GM12878 (cell line): ENCODE measurements at regions of chr4 and their contacts with region 1.

Region 1: DNA sequence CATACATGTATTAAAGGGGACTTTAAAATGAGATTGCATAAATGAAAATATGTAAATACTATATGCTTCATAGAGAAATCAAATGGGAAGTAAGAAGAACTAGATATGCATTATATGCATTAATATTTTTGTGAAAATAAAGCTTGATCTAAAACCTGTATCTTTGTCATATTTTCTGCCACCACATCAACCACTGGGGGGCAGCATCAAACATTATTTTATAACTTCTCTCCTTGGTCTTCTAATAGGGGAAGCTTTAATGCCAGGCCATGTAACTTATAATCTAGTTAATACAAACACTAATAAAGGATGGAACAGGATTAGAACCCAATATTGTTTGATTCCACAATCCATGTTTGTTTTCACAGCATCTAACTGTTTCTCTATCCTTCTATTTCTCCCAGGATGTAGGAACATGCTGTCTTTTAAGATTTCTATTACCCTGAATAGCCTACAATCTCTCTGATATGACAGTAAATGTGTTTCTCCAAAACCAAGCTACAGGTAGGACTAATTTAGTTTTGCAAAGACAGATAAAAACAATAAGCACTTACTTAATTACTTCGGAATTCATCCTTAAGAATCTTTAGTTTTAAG is 10.0 kb downstream of the QRFPR start:
- DNase-seq: no peak
- ATAC-seq: peak; percentile 81
- H3K4me3 ChIP-seq: no peak overlapping the region
- H3K27ac ChIP-seq: no peak overlapping the region
- H3K4me1 ChIP-seq: no peaks in the 10 kb centered on the region
- H3K27me3 ChIP-seq: no peaks in the 10 kb centered on the region; a peak in 1 of 4 replicates
- CTCF ChIP-seq: peak; percentile 34 to 64 (median 52); a peak in 5 of 6 replicates
- EP300 ChIP-seq: no peak
- POLR2A ChIP-seq: no peak
- RAD21 ChIP-seq: peak; percentile 47

Region 2: DNA sequence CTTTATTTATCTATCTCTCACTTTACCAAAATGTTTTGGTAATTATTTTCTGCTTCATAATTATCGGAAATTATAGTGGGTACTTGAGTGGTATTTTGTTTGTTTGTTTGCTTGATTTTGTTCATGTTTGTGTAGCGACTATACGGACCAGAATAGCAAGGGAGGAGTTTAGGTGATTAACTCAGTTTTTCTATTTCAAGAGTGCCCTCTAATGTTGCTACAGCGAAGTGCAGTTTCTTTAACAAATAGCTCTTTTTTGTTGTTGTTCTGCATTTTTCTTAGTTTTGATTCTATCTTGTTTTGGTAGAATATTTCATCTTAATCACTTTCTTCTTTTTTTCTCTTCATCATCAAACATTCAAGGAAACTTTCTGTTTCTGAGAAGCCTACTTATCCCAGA is 50.8 kb after region 1 on chr4:
- CTCF ChIA-PET with region 1: interaction called, 23 read pairs
- POLR2A ChIA-PET with region 1: no interaction called
- RAD21 ChIA-PET with region 1: interaction called, 10 read pairs
- SMC1A ChIA-PET with region 1: interaction called, 17 read pairs
- in situ Hi-C with region 1: no loop called
- intact Hi-C with region 1: no loop called
- DNase-seq: no peak
- ATAC-seq: no peak
- H3K4me3 ChIP-seq: no peak overlapping the region
- H3K27ac ChIP-seq: no peak overlapping the region
- H3K4me1 ChIP-seq: no peaks in the 10 kb centered on the region
- H3K27me3 ChIP-seq: no peaks in the 10 kb centered on the region
- CTCF ChIP-seq: peak in 1 of 3 experiments; percentile 22; a peak in 1 of 6 replicates
- EP300 ChIP-seq: no peak
- POLR2A ChIP-seq: no peak
- RAD21 ChIP-seq: 0 out of 2 replicates have a peak, but pooled peaks have one; percentile 6

Region 3: DNA sequence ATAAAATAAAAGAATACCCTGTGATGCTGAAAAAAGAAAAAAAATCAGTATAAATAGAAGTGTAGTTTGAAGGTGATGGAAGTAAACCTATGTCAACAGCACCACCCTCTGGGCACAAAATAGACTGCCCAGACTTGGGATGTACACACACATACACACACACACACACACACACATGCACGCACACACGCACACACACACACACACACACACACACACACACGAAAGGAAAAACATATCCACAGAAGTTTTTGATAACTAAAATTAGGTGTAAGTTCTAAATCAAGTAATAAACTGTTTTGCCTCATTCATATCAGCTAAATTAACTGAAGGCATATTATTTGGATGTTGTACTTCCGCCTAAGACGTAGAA is 285.4 kb after region 1 on chr4:
- CTCF ChIA-PET with region 1: interaction called, 27 read pairs
- POLR2A ChIA-PET with region 1: no interaction called
- RAD21 ChIA-PET with region 1: interaction called, 5 read pairs
- SMC1A ChIA-PET with region 1: interaction called, 5 read pairs
- in situ Hi-C with region 1: loop called (anchors 10 kb)
- intact Hi-C with region 1: loop called (anchors 1 kb)
- DNase-seq: peak; percentile 7
- ATAC-seq: peak; percentile 79
- H3K4me3 ChIP-seq: no peak overlapping the region
- H3K27ac ChIP-seq: no peak overlapping the region
- H3K4me1 ChIP-seq: peaks cover 12% of the 10 kb centered on the region
- H3K27me3 ChIP-seq: no peaks in the 10 kb centered on the region
- CTCF ChIP-seq: peak; percentile 38 to 53 (median 49); a peak in 5 of 6 replicates
- EP300 ChIP-seq: no peak
- POLR2A ChIP-seq: no peak
- RAD21 ChIP-seq: peak; percentile 58

Region 4: GRCh38 chr4:121736735-121737351 is 366.0 kb after region 1 on chr4:
- CTCF ChIA-PET with region 1: interaction called, 11 read pairs
- POLR2A ChIA-PET with region 1: no interaction called
- RAD21 ChIA-PET with region 1: interaction called, 6 read pairs
- SMC1A ChIA-PET with region 1: interaction called, 4 read pairs
- in situ Hi-C with region 1: no loop called
- intact Hi-C with region 1: loop called (anchors 1 kb)
- DNase-seq: no peak
- ATAC-seq: peak; percentile 80
- H3K4me3 ChIP-seq: no peak overlapping the region
- H3K27ac ChIP-seq: no peak overlapping the region
- H3K4me1 ChIP-seq: no peaks in the 10 kb centered on the region
- H3K27me3 ChIP-seq: no peaks in the 10 kb centered on the region; a peak in 1 of 4 replicates
- CTCF ChIP-seq: peak; percentile 33 to 53 (median 43); a peak in 4 of 6 replicates
- EP300 ChIP-seq: no peak
- POLR2A ChIP-seq: no peak
- RAD21 ChIP-seq: peak; percentile 56